ENCODE measurements at regions of chr6 and their contacts with region 1.

Region 1: DNA sequence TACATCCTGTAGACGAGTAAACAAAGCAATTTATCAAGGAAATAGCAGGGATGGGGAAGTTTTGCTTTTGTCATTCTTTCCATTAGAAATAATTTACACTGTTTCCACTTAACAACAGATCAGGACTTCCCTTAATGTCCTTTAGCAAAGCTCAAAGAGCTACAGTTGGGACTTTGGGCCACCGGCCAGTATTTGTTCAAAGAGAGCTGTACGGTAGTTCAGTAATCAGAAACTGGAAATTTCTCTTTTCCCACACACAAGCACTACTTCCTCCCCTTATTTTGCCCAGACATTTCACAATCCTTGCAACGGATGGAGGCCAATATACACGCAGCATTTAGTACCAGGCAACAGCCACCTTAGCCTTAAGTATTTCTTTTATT is 12.1 kb upstream of the HINT3 start:
- DNase-seq: peak; percentile 98
- ATAC-seq: peak; percentile 96
- H3K4me3 ChIP-seq: peak overlapping the region in 2 of 3 experiments; percentile 35 to 56; a peak in 3 of 6 replicates
- H3K27ac ChIP-seq: peak overlapping the region; percentile 92
- H3K4me1 ChIP-seq: peaks cover 85% of the 10 kb centered on the region
- H3K27me3 ChIP-seq: no peaks in the 10 kb centered on the region
- CTCF ChIP-seq: no peak
- EP300 ChIP-seq: peak; percentile 56 to 88; a peak in 2 of 4 replicates
- POLR2A ChIP-seq: no peak
- RAD21 ChIP-seq: no peak

Region 2: DNA sequence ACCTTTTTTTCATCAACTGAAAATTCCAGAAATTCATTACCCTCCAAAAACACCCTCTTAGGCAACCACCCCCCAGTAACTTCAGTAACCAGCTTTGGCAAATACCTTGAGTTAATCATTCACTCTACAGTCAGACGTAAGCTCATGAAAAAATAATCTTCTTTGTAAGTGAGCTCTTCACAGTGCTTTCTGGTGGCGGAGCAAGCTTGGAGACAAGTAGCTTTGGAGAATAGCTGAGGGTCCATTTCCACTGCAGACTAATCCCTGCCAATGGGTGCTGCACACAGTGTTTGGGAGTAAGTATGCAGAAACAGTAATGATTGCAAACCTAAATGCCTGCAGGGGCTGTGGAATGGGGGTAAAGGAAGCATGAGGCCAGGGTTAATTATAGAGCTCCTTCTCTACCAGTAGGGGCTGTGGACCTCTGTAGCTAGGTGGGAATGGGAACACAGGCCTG is 44.7 kb before region 1 on chr6:
- CTCF ChIA-PET with region 1: no interaction called
- POLR2A ChIA-PET with region 1: interaction called, 13 read pairs
- in situ Hi-C with region 1: no loop called
- intact Hi-C with region 1: no loop called
- DNase-seq: peak; percentile 86
- ATAC-seq: peak; percentile 99
- H3K4me3 ChIP-seq: peak overlapping the region; percentile 39 to 59 (median 56); a peak in 4 of 6 replicates
- H3K27ac ChIP-seq: peak overlapping the region; percentile 81
- H3K4me1 ChIP-seq: peaks cover 53% of the 10 kb centered on the region
- H3K27me3 ChIP-seq: no peaks in the 10 kb centered on the region
- CTCF ChIP-seq: peak; percentile 48
- EP300 ChIP-seq: peak in 1 of 2 experiments; percentile 58; a peak in 1 of 4 replicates
- POLR2A ChIP-seq: peak; percentile 54 to 56; a peak in 3 of 4 replicates
- RAD21 ChIP-seq: no peak

Region 3: GRCh38 chr6:125918681-125919566 is 25.5 kb before region 1 on chr6:
- CTCF ChIA-PET with region 1: no interaction called
- POLR2A ChIA-PET with region 1: interaction called, 30 read pairs
- in situ Hi-C with region 1: no loop called
- intact Hi-C with region 1: loop called (anchors 1 kb)
- DNase-seq: peak; percentile 97
- ATAC-seq: peak; percentile 97
- H3K4me3 ChIP-seq: peak overlapping the region; percentile 51 to 65 (median 52)
- H3K27ac ChIP-seq: peak overlapping the region; percentile 84
- H3K4me1 ChIP-seq: peaks cover 62% of the 10 kb centered on the region
- H3K27me3 ChIP-seq: no peaks in the 10 kb centered on the region
- CTCF ChIP-seq: no peak
- EP300 ChIP-seq: peak in 1 of 2 experiments; percentile 64; a peak in 2 of 4 replicates
- POLR2A ChIP-seq: peak; percentile 46 to 96; a peak in 3 of 4 replicates
- RAD21 ChIP-seq: no peak; the same call in 1 of the 2 replicates

Region 4: DNA sequence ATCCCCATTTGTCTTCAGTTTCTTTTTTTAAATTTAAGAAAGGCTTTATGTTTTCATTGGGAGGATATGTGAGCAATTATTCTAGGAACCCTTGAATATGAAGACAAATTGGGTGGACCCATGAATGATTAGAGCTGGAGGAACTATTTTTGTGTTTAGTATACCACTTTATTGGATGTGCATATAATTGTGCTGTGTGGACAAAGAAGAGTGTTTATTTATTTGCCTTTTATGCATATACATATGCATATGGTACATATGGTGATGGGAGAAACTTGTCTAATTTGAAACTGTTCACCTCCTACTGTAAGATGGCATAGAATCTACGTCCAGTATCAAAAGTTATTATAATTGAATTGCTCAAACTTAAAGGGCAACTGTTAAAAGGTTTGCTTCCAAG is 300.7 kb after region 1 on chr6:
- CTCF ChIA-PET with region 1: no interaction called
- POLR2A ChIA-PET with region 1: no interaction called
- in situ Hi-C with region 1: no loop called
- intact Hi-C with region 1: no loop called
- DNase-seq: no peak
- ATAC-seq: no peak
- H3K4me3 ChIP-seq: no peak overlapping the region
- H3K27ac ChIP-seq: no peak overlapping the region
- H3K4me1 ChIP-seq: no peaks in the 10 kb centered on the region
- H3K27me3 ChIP-seq: no peaks in the 10 kb centered on the region
- CTCF ChIP-seq: no peak
- EP300 ChIP-seq: no peak
- POLR2A ChIP-seq: no peak
- RAD21 ChIP-seq: no peak

Measured in HepG2 (cell line).